Activated naive CD4-positive, alpha-beta T cell treated with anti-CD3 and anti-CD28 coated beads for 36 hours (primary cell): ENCODE measurements at regions of chr3 and their contacts with region 1.

Region 1: GRCh38 chr3:39288300-39288808 is 8.5 kb upstream of the CX3CR1 start:
- DNase-seq: peak; percentile 91
- H3K4me3 Mint-ChIP-seq: no peak overlapping the region
- H3K27ac Mint-ChIP-seq: no peak overlapping the region
- H3K4me1 Mint-ChIP-seq: peaks cover 12% of the 10 kb centered on the region
- H3K27me3 Mint-ChIP-seq: no peaks in the 10 kb centered on the region

Region 2: DNA sequence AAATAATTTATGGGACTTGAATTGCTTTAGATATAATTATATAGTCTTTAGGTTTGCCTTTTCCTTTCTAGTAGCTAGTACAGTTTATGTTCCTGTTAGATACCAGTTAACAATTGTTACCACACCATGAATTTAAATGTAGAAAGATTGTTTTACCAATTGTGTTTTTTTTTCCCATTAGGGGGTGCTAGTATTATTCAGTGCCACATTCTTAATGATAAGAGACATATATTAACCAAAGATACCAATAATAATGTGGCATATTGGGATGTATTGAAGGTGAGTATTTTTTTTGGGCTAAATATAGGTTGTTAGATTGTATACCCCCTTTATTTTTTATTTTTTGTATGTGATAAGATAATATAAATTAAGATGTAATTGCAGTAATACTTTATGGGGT is 208.8 kb before region 1 on chr3:
- CTCF ChIA-PET with region 1: interaction called, 12 read pairs
- intact Hi-C with region 1: no loop called
- DNase-seq: no peak
- H3K4me3 Mint-ChIP-seq: no peak overlapping the region
- H3K27ac Mint-ChIP-seq: no peak overlapping the region
- H3K4me1 Mint-ChIP-seq: peaks cover 18% of the 10 kb centered on the region
- H3K27me3 Mint-ChIP-seq: no peaks in the 10 kb centered on the region

Region 3: GRCh38 chr3:39146984-39147591 is 141.3 kb before region 1 on chr3:
- CTCF ChIA-PET with region 1: interaction called, 12 read pairs
- intact Hi-C with region 1: no loop called
- DNase-seq: peak; percentile 92
- H3K4me3 Mint-ChIP-seq: peak overlapping the region; percentile 99
- H3K27ac Mint-ChIP-seq: peak overlapping the region; percentile 98
- H3K4me1 Mint-ChIP-seq: peaks cover 70% of the 10 kb centered on the region
- H3K27me3 Mint-ChIP-seq: no peaks in the 10 kb centered on the region

Region 4: DNA sequence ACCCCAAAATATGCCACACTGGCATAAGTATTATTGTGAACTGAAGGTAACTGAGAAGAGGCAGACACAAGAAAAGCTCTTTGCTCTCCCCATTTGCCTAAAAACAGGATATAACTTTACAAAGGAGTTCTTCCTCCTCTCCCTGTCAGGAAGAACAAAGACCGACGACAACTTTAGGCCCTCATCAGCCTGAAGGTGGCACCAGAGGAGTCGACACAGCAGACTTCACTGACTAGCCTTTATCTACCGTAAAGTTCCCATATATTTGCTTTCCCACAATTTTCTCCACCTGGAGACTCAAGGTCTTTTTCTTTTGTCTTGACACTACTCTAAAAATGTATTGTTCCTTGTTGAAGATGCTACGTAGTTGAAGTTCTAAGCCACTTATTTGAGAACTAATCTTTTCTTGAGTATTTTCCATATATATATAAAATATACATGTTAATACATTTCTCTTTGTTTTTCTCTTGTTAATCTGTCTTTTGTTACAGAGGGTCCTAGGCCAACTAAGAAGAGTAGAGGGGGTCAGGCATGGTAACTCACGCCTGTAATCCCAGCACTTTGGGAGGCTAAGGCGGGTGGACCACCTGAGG is 79.8 kb before region 1 on chr3:
- CTCF ChIA-PET with region 1: interaction called, 21 read pairs
- intact Hi-C with region 1: loop called (anchors 1 kb)
- DNase-seq: peak; percentile 72
- H3K4me3 Mint-ChIP-seq: no peak overlapping the region
- H3K27ac Mint-ChIP-seq: no peak overlapping the region
- H3K4me1 Mint-ChIP-seq: peaks cover 8% of the 10 kb centered on the region
- H3K27me3 Mint-ChIP-seq: no peaks in the 10 kb centered on the region

Region 5: DNA sequence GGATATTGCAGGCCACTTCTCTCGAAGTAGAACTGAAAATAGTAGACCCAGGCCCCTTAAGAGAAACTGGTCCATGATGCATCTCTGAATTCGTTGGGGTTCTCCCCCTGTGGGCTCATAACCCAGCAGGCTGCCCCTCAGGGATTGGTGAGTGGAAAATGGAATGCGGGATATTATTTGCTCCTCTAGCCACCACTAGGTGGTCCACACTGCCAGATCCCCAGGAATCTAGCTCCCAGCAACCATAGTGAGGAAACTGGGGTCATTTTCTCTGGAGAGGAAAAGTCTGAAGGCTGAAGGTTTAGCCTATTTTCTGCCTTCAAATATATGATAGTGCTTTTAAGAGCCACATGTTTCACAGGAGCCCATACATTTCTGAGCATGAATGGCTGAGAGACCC is 15.2 kb before region 1 on chr3:
- CTCF ChIA-PET with region 1: interaction called, 40 read pairs
- intact Hi-C with region 1: no loop called
- DNase-seq: no peak
- H3K4me3 Mint-ChIP-seq: no peak overlapping the region
- H3K27ac Mint-ChIP-seq: no peak overlapping the region
- H3K4me1 Mint-ChIP-seq: peaks cover 5% of the 10 kb centered on the region
- H3K27me3 Mint-ChIP-seq: no peaks in the 10 kb centered on the region

Region 6: GRCh38 chr3:39361252-39361927 is 73.0 kb after region 1 on chr3:
- CTCF ChIA-PET with region 1: interaction called, 12 read pairs
- intact Hi-C with region 1: no loop called
- DNase-seq: peak; percentile 64
- H3K4me3 Mint-ChIP-seq: no peak overlapping the region
- H3K27ac Mint-ChIP-seq: peak overlapping the region; percentile 46
- H3K4me1 Mint-ChIP-seq: peaks cover 28% of the 10 kb centered on the region
- H3K27me3 Mint-ChIP-seq: no peaks in the 10 kb centered on the region